AG04449 (cell line): ENCODE measurements at regions of chr6 and their contacts with region 1.

Region 1: GRCh38 chr6:36123257-36124139 is 6.8 kb upstream of the MAPK13 start:
- DNase-seq: no peak
- H3K4me3 ChIP-seq: no peak overlapping the region
- CTCF ChIP-seq: peak; percentile 91

Region 2: GRCh38 chr6:36109092-36109491 is 14.4 kb before region 1 on chr6:
- CTCF ChIA-PET with region 1: interaction called, 22 read pairs
- POLR2A ChIA-PET with region 1: no interaction called
- DNase-seq: no peak
- H3K4me3 ChIP-seq: no peak overlapping the region
- CTCF ChIP-seq: no peak